Naive thymus-derived CD4-positive, alpha-beta T cell (primary cell): ENCODE measurements at regions of chr16 and their contacts with region 1.

Region 1: GRCh38 chr16:53435066-53435688 is 906 bp downstream of the RBL2 start:
- DNase-seq: peak; percentile 33 to 76 (median 73)
- ATAC-seq: peak; percentile 79
- H3K4me3 ChIP-seq: peak overlapping the region; percentile 91
- H3K4me3 Mint-ChIP-seq: peak overlapping the region; percentile 91 to 100 (median 94)
- H3K27ac ChIP-seq: peak overlapping the region; percentile 90
- H3K27ac Mint-ChIP-seq: peak overlapping the region; percentile 92 to 98 (median 95)
- H3K4me1 ChIP-seq: peaks cover 12 to 33% of the 10 kb centered on the region in 2 donors
- H3K4me1 Mint-ChIP-seq: peaks cover 24 to 49% (median 41%) of the 10 kb centered on the region in 7 donors
- H3K27me3 ChIP-seq: no peaks in the 10 kb centered on the region
- H3K27me3 Mint-ChIP-seq: peaks cover 0 to 5% (median 0%) of the 10 kb centered on the region in 5 donors

Region 2: GRCh38 chr16:53130159-53131049 is 304.8 kb before region 1 on chr16:
- CTCF ChIA-PET with region 1: no interaction called
- POLR2A ChIA-PET with region 1: no interaction called
- intact Hi-C with region 1: loop called (anchors 1 kb)
- DNase-seq: peak; percentile 93 to 96 (median 95)
- ATAC-seq: peak; percentile 94
- H3K4me3 ChIP-seq: peak overlapping the region; percentile 77
- H3K4me3 Mint-ChIP-seq: peak overlapping the region; percentile 69 to 94 (median 84)
- H3K27ac ChIP-seq: peak overlapping the region; percentile 73
- H3K27ac Mint-ChIP-seq: peak overlapping the region; percentile 57 to 90 (median 79)
- H3K4me1 ChIP-seq: peaks cover 0 to 4% of the 10 kb centered on the region in 2 donors
- H3K4me1 Mint-ChIP-seq: peaks cover 6 to 29% (median 12%) of the 10 kb centered on the region in 7 donors
- H3K27me3 ChIP-seq: no peaks in the 10 kb centered on the region
- H3K27me3 Mint-ChIP-seq: peaks cover 0 to 6% (median 0%) of the 10 kb centered on the region in 5 donors

Region 3: GRCh38 chr16:53198933-53199332 is 236.2 kb before region 1 on chr16:
- CTCF ChIA-PET with region 1: no interaction called
- POLR2A ChIA-PET with region 1: no interaction called
- intact Hi-C with region 1: no loop called
- DNase-seq: no peak
- ATAC-seq: no peak
- H3K4me3 ChIP-seq: no peak overlapping the region
- H3K4me3 Mint-ChIP-seq: no peak overlapping the region
- H3K27ac ChIP-seq: no peak overlapping the region
- H3K27ac Mint-ChIP-seq: no peak overlapping the region
- H3K4me1 ChIP-seq: no peaks in the 10 kb centered on the region
- H3K4me1 Mint-ChIP-seq: peaks cover 0 to 7% (median 3%) of the 10 kb centered on the region in 7 donors
- H3K27me3 ChIP-seq: no peaks in the 10 kb centered on the region
- H3K27me3 Mint-ChIP-seq: no peaks in the 10 kb centered on the region

Region 4: GRCh38 chr16:53449632-53450517 is 14.7 kb after region 1 on chr16:
- CTCF ChIA-PET with region 1: interaction called, 41 read pairs
- POLR2A ChIA-PET with region 1: interaction called, 517 read pairs
- intact Hi-C with region 1: loop called in 1 of 2 experiments (anchors 1 kb)
- DNase-seq: peak in 3 of 9 donors; percentile 13 to 16 (median 15)
- ATAC-seq: peak; percentile 46
- H3K4me3 ChIP-seq: peak overlapping the region; percentile 43
- H3K4me3 Mint-ChIP-seq: peak overlapping the region; percentile 12 to 93 (median 80)
- H3K27ac ChIP-seq: peak overlapping the region; percentile 64
- H3K27ac Mint-ChIP-seq: peak overlapping the region; percentile 50 to 95 (median 86)
- H3K4me1 ChIP-seq: peaks cover 48 to 49% of the 10 kb centered on the region in 2 donors
- H3K4me1 Mint-ChIP-seq: peaks cover 30 to 91% (median 78%) of the 10 kb centered on the region in 7 donors
- H3K27me3 ChIP-seq: no peaks in the 10 kb centered on the region
- H3K27me3 Mint-ChIP-seq: no peaks in the 10 kb centered on the region

Region 5: DNA sequence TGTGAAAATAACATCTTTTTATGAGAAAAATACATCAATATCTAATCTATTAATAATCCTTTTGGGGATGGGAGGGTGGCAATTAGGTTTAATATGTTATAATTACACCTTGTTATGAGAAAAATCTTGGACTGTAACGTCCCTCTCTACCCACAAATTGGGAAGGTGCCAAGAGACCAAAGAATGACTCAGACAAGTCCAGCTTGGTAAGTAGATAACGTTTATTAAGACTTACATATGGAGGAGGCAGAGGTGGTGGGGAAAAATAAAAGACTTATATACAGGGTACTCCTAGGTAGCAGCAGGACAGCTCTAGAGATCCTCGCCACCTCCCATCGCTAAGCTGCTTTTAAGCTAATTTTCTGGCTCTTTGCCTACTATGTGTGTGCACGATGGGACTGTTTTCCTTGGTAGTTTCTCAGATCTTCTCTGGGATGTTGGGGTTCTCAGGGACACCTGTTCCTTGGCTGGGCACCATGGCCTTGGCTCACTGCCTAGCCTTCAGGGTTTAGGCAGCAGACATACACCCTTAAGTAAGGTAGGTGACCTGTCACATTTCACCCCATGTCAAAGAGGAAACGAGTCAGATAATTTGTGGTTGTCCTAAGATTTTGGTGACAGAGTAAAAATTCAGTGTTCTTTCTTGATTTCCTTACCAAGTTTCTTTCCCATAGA is 30.6 kb after region 1 on chr16:
- CTCF ChIA-PET with region 1: interaction called, 3 read pairs
- POLR2A ChIA-PET with region 1: interaction called, 517 read pairs
- intact Hi-C with region 1: loop called in 1 of 2 experiments (anchors 5 kb)
- DNase-seq: no peak
- ATAC-seq: no peak
- H3K4me3 ChIP-seq: no peak overlapping the region
- H3K4me3 Mint-ChIP-seq: peak overlapping the region in 8 of 10 donors; percentile 19 to 70 (median 48)
- H3K27ac ChIP-seq: no peak overlapping the region
- H3K27ac Mint-ChIP-seq: peak overlapping the region in 8 of 9 donors; percentile 24 to 94 (median 77)
- H3K4me1 ChIP-seq: peaks cover 14 to 36% of the 10 kb centered on the region in 2 donors
- H3K4me1 Mint-ChIP-seq: peaks cover 15 to 73% (median 54%) of the 10 kb centered on the region in 7 donors
- H3K27me3 ChIP-seq: no peaks in the 10 kb centered on the region
- H3K27me3 Mint-ChIP-seq: no peaks in the 10 kb centered on the region

Region 6: DNA sequence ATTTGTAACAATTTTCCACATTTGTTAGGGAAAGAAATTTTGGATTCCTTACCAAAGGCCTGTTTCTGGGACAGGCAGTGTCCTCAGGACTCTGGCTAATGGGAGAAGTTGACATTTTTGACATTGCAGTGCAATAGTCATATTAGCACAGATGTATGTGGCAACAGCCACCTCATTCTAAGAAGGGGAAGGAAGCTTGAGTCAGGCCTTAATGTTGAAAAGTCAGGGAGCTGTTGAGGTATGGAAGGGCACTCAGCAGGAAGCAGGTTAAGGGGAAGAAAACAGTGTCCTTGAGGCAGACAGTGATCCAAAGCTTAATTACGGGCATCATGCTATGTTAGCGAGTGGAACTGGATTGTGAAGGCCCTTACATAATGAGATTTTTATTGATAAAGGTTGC is 46.9 kb after region 1 on chr16:
- CTCF ChIA-PET with region 1: no interaction called
- POLR2A ChIA-PET with region 1: interaction called, 35 read pairs
- intact Hi-C with region 1: no loop called
- DNase-seq: no peak
- ATAC-seq: peak; percentile 86
- H3K4me3 ChIP-seq: no peak overlapping the region
- H3K4me3 Mint-ChIP-seq: peak overlapping the region in 2 of 10 donors; percentile 32 to 33
- H3K27ac ChIP-seq: no peak overlapping the region
- H3K27ac Mint-ChIP-seq: peak overlapping the region in 8 of 9 donors; percentile 36 to 90 (median 78)
- H3K4me1 ChIP-seq: peaks cover 3 to 4% of the 10 kb centered on the region in 2 donors
- H3K4me1 Mint-ChIP-seq: peaks cover 15 to 64% (median 38%) of the 10 kb centered on the region in 7 donors
- H3K27me3 ChIP-seq: no peaks in the 10 kb centered on the region
- H3K27me3 Mint-ChIP-seq: no peaks in the 10 kb centered on the region

Region 7: DNA sequence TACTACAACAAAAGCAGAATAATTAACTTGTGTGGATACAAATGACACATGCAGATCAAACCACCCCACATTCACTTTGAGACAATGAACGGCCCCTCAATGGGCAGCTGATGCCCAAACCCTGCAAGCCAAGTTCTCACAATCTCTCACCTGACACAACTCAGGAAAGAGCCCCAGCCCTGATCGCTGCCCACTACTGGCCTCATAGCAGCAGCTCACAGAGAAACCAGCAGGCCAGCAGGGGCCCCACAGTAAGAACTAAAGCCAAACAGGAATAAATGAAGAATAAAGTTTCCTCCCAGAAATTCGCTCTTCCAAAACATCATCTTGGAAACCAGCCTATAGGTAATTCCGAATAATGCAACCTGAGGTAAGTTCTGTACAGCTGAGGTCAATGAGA is 60.1 kb after region 1 on chr16:
- CTCF ChIA-PET with region 1: interaction called, 4 read pairs
- POLR2A ChIA-PET with region 1: interaction called, 136 read pairs
- intact Hi-C with region 1: no loop called
- DNase-seq: no peak
- ATAC-seq: no peak
- H3K4me3 ChIP-seq: no peak overlapping the region
- H3K4me3 Mint-ChIP-seq: peak overlapping the region in 1 of 10 donors; percentile 19
- H3K27ac ChIP-seq: no peak overlapping the region
- H3K27ac Mint-ChIP-seq: peak overlapping the region in 7 of 9 donors; percentile 33 to 83 (median 57)
- H3K4me1 ChIP-seq: peaks cover 5 to 15% of the 10 kb centered on the region in 2 donors
- H3K4me1 Mint-ChIP-seq: peaks cover 22 to 93% (median 61%) of the 10 kb centered on the region in 7 donors
- H3K27me3 ChIP-seq: no peaks in the 10 kb centered on the region
- H3K27me3 Mint-ChIP-seq: no peaks in the 10 kb centered on the region

Region 8: GRCh38 chr16:53703590-53704444 is 268.6 kb after region 1 on chr16 and contains the starts of genes FTO and RPGRIP1L:
- CTCF ChIA-PET with region 1: no interaction called
- POLR2A ChIA-PET with region 1: no interaction called
- intact Hi-C with region 1: loop called (anchors 2 kb)
- DNase-seq: peak; percentile 85 to 97 (median 93)
- ATAC-seq: peak; percentile 95
- H3K4me3 ChIP-seq: peak within 1 kb of the TSS; percentile 78
- H3K4me3 Mint-ChIP-seq: peak within 1 kb of the TSS; percentile 85 to 100 (median 98)
- H3K27ac ChIP-seq: peak within 1 kb of the TSS; percentile 66
- H3K27ac Mint-ChIP-seq: peak within 1 kb of the TSS; percentile 90 to 99 (median 95)
- H3K4me1 ChIP-seq: peaks cover 15 to 16% of the 10 kb centered on the region in 2 donors
- H3K4me1 Mint-ChIP-seq: peaks cover 17 to 48% (median 42%) of the 10 kb centered on the region in 7 donors
- H3K27me3 ChIP-seq: no peaks in the 10 kb centered on the region
- H3K27me3 Mint-ChIP-seq: no peaks in the 10 kb centered on the region
- total RNA-seq, gene FTO: 47.2 to 63.5 (median 57.9) TPM
- total RNA-seq, gene RPGRIP1L: 2.0 to 6.1 (median 3.6) TPM